Heart left ventricle (tissue), 16 donors: ENCODE measurements at regions of chr9 and their contacts with region 1.

Region 1: GRCh38 chr9:27529316-27530278 is at the start of gene MOB3B:
- DNase-seq: peak; percentile 80 to 93 (median 86)
- ATAC-seq: peak; percentile 41 to 94 (median 84)
- H3K4me3 ChIP-seq: peak within 1 kb of the TSS; percentile 67 to 93 (median 80)
- H3K27ac ChIP-seq: peak within 1 kb of the TSS; percentile 17 to 92 (median 74)
- H3K4me1 ChIP-seq: peaks cover 0 to 38% (median 7%) of the 10 kb centered on the region in 12 donors
- H3K27me3 ChIP-seq: no peaks in the 10 kb centered on the region
- CTCF ChIP-seq: peak; percentile 82 to 98 (median 95)
- POLR2A ChIP-seq: no peak
- total RNA-seq, gene MOB3B: 0.54 to 2.8 (median 2.1) TPM

Region 2: DNA sequence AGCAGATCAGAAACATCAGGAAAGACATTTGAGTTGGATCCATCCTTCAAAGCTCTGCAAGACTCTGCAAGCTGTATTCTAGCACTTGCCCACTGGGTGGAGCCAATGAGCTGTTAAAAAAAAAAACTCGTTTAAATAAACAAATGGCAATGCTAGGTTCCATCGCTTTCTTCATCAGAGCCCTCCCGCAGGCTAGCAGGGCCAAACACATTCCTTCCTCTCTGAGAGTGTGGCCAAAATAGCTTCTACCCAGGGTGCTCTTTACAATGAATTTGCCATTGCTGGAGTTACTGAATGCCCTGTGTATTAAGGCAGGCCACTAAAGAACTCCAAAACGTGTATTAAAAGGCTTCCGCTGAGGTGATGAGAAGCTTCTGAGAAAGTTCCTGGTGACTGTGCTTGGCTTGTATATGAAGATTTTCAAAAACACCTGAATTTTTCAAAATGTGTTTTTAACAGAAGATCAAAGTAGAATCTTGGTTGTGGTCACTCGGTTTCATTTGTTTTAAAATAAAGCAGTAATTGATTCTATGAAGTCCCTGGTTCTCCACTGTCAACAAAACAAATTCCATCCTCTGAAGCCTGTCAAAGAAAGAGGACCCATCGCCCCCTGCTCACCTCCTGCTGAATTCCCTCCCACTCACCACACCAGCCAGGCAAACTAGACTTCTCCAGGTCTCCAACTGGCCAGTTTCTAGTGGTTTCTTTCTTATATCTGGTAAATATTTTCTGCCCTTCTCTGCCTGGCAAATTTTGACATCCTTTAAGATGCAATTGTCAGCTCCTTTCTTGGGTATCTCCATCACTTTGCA is 196.2 kb before region 1 on chr9:
- intact Hi-C with region 1: loop called (anchors 1 to 5 kb)
- DNase-seq: peak in 4 of 5 donors; percentile 51 to 64 (median 58)
- ATAC-seq: peak; percentile 89 to 97 (median 90)
- H3K4me3 ChIP-seq: no peak overlapping the region
- H3K27ac ChIP-seq: no peak overlapping the region
- H3K4me1 ChIP-seq: peaks cover 0 to 17% (median 7%) of the 10 kb centered on the region in 12 donors
- H3K27me3 ChIP-seq: no peaks in the 10 kb centered on the region
- CTCF ChIP-seq: peak; percentile 83 to 93 (median 90)
- POLR2A ChIP-seq: no peak

Region 3: DNA sequence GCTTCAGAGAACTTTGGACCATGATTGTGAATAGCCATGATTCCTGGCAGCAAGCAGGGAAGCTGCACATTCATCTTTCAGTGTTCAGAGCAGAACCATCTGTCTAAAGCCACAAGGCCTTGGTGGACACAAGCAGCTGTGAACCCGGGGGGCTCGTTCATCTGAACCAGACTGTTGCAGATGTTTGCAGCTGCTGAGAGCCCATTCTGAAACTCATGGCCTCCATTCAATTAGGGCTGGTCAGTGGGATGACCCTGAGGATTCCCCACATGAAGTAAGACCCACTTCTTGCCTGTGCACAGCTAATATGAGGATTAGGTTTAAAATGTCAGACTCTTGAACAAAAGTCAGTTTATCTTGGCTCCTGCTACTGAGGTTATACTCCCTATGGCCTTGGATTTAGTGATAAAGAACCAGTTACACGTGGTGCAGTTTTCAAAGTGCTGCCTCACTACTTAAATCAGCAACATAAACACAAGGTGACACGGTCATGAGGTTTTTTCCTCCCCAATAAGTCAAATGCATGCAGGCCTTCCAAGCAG is 115.3 kb before region 1 on chr9:
- intact Hi-C with region 1: loop called in 2 of 10 experiments (anchors 5 kb)
- DNase-seq: peak; percentile 66 to 86 (median 74)
- ATAC-seq: peak; percentile 56 to 93 (median 85)
- H3K4me3 ChIP-seq: peak overlapping the region in 5 of 12 donors; percentile 24 to 55 (median 49)
- H3K27ac ChIP-seq: peak overlapping the region in 7 of 12 donors; percentile 20 to 40 (median 34)
- H3K4me1 ChIP-seq: peaks cover 0 to 26% (median 6%) of the 10 kb centered on the region in 12 donors
- H3K27me3 ChIP-seq: no peaks in the 10 kb centered on the region
- CTCF ChIP-seq: no peak
- POLR2A ChIP-seq: no peak

Region 4: GRCh38 chr9:27460226-27461023 is 69.2 kb before region 1 on chr9:
- intact Hi-C with region 1: loop called in 1 of 10 experiments (anchors 10 kb)
- DNase-seq: peak in 1 of 5 donors; percentile 38
- ATAC-seq: peak; percentile 45 to 68 (median 53)
- H3K4me3 ChIP-seq: no peak overlapping the region
- H3K27ac ChIP-seq: no peak overlapping the region
- H3K4me1 ChIP-seq: peaks cover 0 to 31% (median 13%) of the 10 kb centered on the region in 12 donors
- H3K27me3 ChIP-seq: no peaks in the 10 kb centered on the region
- CTCF ChIP-seq: no peak
- POLR2A ChIP-seq: no peak